Heart right ventricle (tissue), 16 donors: ENCODE measurements at regions of chr16 and their contacts with region 1.

Region 1: GRCh38 chr16:67260426-67261075 is 11.8 kb downstream of the SLC9A5 start:
- DNase-seq: no peak
- ATAC-seq: peak; percentile 27 to 85 (median 70)
- H3K4me3 ChIP-seq: no peak overlapping the region
- H3K27ac ChIP-seq: no peak overlapping the region
- H3K4me1 ChIP-seq: peaks cover 0 to 8% (median 0%) of the 10 kb centered on the region in 9 donors
- H3K27me3 ChIP-seq: peaks cover 0 to 5% (median 0%) of the 10 kb centered on the region in 7 donors
- CTCF ChIP-seq: peak; percentile 26 to 68 (median 58)

Region 2: DNA sequence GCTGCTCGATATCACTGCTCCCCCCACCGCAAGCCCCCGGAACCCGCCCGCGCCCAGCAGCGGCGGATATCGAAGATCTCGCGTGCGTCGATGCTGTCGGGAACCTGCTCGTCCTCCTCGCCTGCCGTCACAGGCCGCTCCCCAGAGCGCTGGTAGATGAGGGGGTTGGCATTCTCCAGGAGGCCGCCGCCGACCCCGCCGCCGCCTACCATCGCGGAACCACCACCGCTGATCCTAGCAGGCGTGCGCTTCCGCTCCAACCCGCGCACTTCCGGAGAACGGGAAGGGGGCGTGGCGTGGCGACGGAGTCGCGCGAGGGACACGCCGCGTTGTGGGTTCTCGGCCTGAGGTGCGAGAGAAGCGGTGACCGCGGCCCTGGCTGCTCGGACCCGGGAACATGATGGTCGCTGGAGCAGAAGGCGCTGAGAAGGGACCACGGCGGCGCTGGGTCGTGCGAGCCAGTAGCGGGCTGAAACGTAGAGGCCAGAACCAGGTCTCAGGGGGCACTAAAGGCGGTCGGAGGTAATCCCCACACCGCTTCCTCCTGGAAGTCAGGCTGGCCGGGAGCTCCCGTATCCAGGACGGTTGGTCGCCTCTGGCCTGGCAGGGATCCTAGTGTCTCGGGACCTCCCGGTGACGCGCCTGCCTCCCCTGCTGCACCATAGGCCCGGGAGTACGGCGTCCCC is 326.3 kb before region 1 on chr16 and contains the start of gene CIAO2B:
- intact Hi-C with region 1: no loop called
- DNase-seq: peak; percentile 90 to 92
- ATAC-seq: peak; percentile 81 to 94 (median 90)
- H3K4me3 ChIP-seq: peak within 1 kb of the TSS; percentile 62 to 99 (median 86)
- H3K27ac ChIP-seq: peak within 1 kb of the TSS; percentile 83 to 99 (median 95)
- H3K4me1 ChIP-seq: peaks cover 21 to 55% (median 42%) of the 10 kb centered on the region in 9 donors
- H3K27me3 ChIP-seq: no peaks in the 10 kb centered on the region
- CTCF ChIP-seq: no peak
- total RNA-seq, gene CIAO2B: 103 to 196 (median 111) TPM

Region 3: GRCh38 chr16:67393035-67393787 is 132.7 kb after region 1 on chr16 and contains the start of gene TPPP3:
- intact Hi-C with region 1: loop called in 2 of 10 experiments (anchors 5 to 10 kb)
- DNase-seq: peak; percentile 95
- ATAC-seq: peak; percentile 80 to 89 (median 82)
- H3K4me3 ChIP-seq: peak within 1 kb of the TSS; percentile 21 to 62 (median 48)
- H3K27ac ChIP-seq: peak within 1 kb of the TSS; percentile 5 to 88 (median 72)
- H3K4me1 ChIP-seq: peaks cover 27 to 80% (median 47%) of the 10 kb centered on the region in 9 donors
- H3K27me3 ChIP-seq: peaks cover 0 to 45% (median 9%) of the 10 kb centered on the region in 7 donors
- CTCF ChIP-seq: peak; percentile 53 to 88 (median 74)
- total RNA-seq, gene TPPP3: 6.4 to 15.9 (median 9.0) TPM

Region 4: GRCh38 chr16:67399181-67399733 is 138.7 kb after region 1 on chr16:
- intact Hi-C with region 1: loop called in 3 of 10 experiments (anchors 5 to 10 kb)
- DNase-seq: peak in 1 of 2 donors; percentile 69
- ATAC-seq: peak; percentile 27 to 50 (median 35)
- H3K4me3 ChIP-seq: peak overlapping the region in 5 of 10 donors; percentile 15 to 38 (median 24)
- H3K27ac ChIP-seq: peak overlapping the region in 5 of 10 donors; percentile 8 to 88 (median 85)
- H3K4me1 ChIP-seq: peaks cover 23 to 58% (median 44%) of the 10 kb centered on the region in 9 donors
- H3K27me3 ChIP-seq: peaks cover 0 to 39% (median 3%) of the 10 kb centered on the region in 7 donors
- CTCF ChIP-seq: peak; percentile 54 to 89 (median 83)

Region 5: GRCh38 chr16:67406111-67406890 is 145.8 kb after region 1 on chr16:
- intact Hi-C with region 1: loop called in 1 of 10 experiments (anchors 10 kb)
- DNase-seq: peak in 1 of 2 donors; percentile 51
- ATAC-seq: peak; percentile 52 to 87 (median 80)
- H3K4me3 ChIP-seq: no peak overlapping the region
- H3K27ac ChIP-seq: peak overlapping the region in 9 of 10 donors; percentile 53 to 88 (median 78)
- H3K4me1 ChIP-seq: peaks cover 11 to 39% (median 22%) of the 10 kb centered on the region in 9 donors
- H3K27me3 ChIP-seq: no peaks in the 10 kb centered on the region
- CTCF ChIP-seq: no peak